ENCODE measurements at regions of chr2 and their contacts with region 1.

Region 1: GRCh38 chr2:61789807-61790602 is 63.9 kb downstream of the FAM161A start:
- DNase-seq: peak; percentile 83
- H3K4me3 ChIP-seq: no peak overlapping the region
- H3K27ac ChIP-seq: no peak overlapping the region
- H3K4me1 ChIP-seq: peaks cover 4% of the 10 kb centered on the region
- H3K27me3 ChIP-seq: no peaks in the 10 kb centered on the region
- CTCF ChIP-seq: no peak

Region 2: GRCh38 chr2:61658841-61659780 is 130.9 kb before region 1 on chr2:
- CTCF ChIA-PET with region 1: no interaction called
- dilution Hi-C with region 1: no loop called
- in situ Hi-C with region 1: no loop called
- intact Hi-C with region 1: loop called (anchors 5 kb)
- DNase-seq: peak; percentile 21
- H3K4me3 ChIP-seq: no peak overlapping the region
- H3K27ac ChIP-seq: no peak overlapping the region
- H3K4me1 ChIP-seq: peaks cover 5% of the 10 kb centered on the region
- H3K27me3 ChIP-seq: no peaks in the 10 kb centered on the region
- CTCF ChIP-seq: peak; percentile 65 to 66

Region 3: GRCh38 chr2:61694312-61695274 is 95.4 kb before region 1 on chr2:
- CTCF ChIA-PET with region 1: no interaction called
- dilution Hi-C with region 1: no loop called
- in situ Hi-C with region 1: no loop called
- intact Hi-C with region 1: loop called (anchors 1 kb)
- DNase-seq: peak; percentile 78
- H3K4me3 ChIP-seq: peak overlapping the region; percentile 64 to 93 (median 72)
- H3K27ac ChIP-seq: peak overlapping the region; percentile 3
- H3K4me1 ChIP-seq: peaks cover 6% of the 10 kb centered on the region
- H3K27me3 ChIP-seq: peaks cover 2% of the 10 kb centered on the region
- CTCF ChIP-seq: peak; percentile 20 to 60

Region 4: DNA sequence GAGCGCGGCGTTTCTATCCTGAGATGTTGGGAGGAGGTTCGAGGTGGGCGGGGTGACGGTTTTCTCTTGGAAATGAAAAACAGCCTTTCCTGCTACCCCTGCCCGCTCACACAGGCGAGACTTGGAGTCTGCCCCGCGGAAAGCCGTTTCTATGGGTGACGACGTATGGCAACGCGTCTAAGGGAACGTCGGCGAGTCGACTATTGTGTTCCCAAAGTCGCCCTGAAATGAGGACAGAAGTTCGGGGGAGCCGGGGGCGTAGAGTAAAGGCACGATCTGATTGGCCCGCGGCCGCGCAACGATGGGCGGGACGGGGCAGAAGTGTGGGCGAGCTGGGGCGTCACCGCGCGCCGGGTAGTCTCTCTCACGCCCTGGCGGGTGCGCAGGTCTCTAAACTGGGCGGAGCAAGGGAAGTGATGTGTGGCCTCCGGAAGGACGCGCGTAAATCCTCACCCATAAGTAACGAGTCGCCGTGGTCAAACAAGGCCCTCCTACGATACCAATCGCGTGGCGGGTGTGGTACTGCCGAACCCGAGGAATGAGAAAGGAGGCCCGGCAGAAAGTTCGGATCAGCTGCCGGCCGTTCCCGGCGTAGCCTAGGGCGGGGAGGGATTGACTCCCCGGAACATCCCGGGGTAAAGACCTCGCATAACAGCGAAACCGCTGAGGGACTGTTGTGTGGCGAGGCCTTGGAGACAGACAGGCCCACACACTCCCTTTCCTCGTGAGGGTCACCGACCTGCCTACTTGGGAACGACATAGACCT is 25.8 kb before region 1 on chr2:
- CTCF ChIA-PET with region 1: no interaction called
- dilution Hi-C with region 1: no loop called
- in situ Hi-C with region 1: no loop called
- intact Hi-C with region 1: loop called (anchors 2 kb)
- DNase-seq: peak; percentile 99
- H3K4me3 ChIP-seq: peak overlapping the region; percentile 65 to 75 (median 67)
- H3K27ac ChIP-seq: peak overlapping the region; percentile 99
- H3K4me1 ChIP-seq: peaks cover 8% of the 10 kb centered on the region
- H3K27me3 ChIP-seq: no peaks in the 10 kb centered on the region
- CTCF ChIP-seq: no peak

Measured in mammary epithelial cell (primary cell).